ENCODE measurements at regions of chr9 and their contacts with region 1.

Region 1: DNA sequence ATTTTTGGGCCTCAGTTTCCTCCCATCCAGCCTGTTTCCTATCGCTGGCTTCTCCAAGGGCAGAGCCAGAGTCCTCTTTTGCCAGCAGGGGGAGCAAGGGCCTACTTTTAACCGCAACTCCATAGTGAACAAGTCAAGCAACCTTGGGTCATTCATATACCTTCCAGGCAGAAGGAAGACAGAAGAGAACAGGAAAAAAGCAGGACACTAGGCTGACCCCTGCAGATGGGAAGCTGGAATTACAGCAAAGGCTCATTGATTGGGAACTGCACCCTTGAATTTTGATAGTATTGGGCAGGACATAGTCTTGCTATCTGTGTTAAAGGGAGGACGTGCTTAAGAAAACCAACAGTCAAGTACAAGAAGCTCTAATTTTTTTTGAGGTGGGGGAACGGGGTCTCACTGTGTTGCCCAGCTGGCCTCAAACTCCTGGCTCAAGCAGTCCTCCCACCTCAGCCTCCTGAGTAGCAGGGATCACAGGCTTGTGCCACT is 30.1 kb downstream of the QRFP start:
- DNase-seq: no peak

Region 2: DNA sequence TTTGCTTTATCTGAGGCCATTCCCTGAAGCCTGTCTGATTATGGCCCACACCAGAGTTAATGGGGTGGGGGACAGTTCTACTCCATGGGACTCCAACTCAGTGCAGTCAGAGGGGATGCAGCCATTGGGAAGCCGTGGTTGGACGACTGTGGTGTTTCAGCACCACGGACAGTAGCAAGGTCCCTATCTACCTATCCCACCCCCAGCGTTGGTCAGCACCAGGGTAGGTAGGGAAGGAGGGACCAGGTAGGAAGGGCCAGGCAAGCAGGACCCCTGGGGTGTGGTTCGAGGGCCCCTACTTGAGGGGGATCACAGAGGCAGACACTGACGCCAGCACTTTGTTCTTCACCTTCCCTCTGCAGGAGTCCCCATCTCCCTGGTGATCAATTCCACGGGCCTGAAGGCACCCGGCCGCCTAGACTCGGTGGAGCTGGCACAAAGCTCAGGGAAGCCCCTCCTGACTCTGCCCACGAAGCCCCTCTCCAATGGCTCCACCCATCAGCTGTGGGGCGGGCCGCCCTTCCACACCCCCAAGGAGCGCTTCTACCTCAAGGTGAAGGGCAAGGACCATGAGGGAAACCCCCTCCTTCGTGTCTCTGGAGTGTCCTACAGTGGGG is 567.7 kb before region 1 on chr9:
- intact Hi-C with region 1: no loop called
- DNase-seq: no peak

Region 3: GRCh38 chr9:130912932-130913598 is 46.5 kb after region 1 on chr9:
- intact Hi-C with region 1: no loop called
- DNase-seq: no peak

Region 4: DNA sequence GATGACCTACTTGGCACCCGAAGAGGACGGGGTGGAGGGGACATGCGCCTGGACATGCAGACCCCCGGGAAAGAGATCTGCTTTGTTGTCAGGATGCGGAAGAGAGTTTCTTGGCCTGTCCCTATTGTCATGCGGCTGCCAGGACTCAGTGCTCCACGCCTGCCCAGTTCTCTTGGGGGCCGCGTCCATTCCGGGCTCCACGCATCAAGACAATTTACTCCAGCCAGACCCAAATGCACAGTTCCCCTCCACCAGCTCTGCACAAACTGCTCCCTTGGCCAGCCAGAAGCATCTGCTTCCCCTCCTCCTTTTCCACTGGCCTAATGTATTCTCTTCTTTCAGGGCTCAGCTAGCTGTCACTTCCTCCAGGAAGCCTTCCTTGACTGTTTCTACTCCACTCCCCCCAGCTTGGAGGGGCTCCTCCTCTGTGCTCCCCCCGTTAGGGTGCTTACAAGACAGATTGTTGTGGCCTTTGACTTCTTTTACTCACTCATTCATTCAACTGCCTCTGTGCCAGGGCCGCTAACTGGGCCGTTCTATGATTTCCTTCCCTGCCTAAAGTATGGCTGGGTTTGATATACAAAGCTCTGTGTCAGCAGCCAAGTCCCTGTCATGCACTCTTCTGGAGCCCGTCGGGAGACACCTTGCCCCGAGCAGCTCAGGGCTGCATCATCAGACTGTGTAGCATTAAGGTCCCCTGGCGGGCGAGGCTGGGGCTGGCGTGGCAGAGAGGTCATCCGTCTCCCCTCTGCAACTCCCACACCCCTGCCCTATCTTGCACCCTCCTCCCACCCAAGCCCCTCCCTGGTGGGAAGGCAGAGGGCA is 65.9 kb after region 1 on chr9:
- intact Hi-C with region 1: loop called (anchors 2 kb)
- DNase-seq: peak; percentile 86

Region 5: GRCh38 chr9:130997925-130998596 is 131.5 kb after region 1 on chr9:
- intact Hi-C with region 1: loop called (anchors 2 kb)
- DNase-seq: no peak

Region 6: GRCh38 chr9:131046581-131047202 is 180.2 kb after region 1 on chr9:
- intact Hi-C with region 1: loop called (anchors 10 kb)
- DNase-seq: no peak